Dendritic cell treated with granulocyte-macrophage colony-stimulating factor and Interleukin-4, amounts not matched to agents 40 ng/mL and 50 ng/mL, for 4 days (primary cell): ENCODE measurements at regions of chr6 and their contacts with region 1.

Region 1: GRCh38 chr6:145814501-145815308 is at the start of gene FBXO30:
- H3K4me3 Mint-ChIP-seq: peak within 1 kb of the TSS; percentile 88
- H3K27ac Mint-ChIP-seq: peak within 1 kb of the TSS; percentile 97
- H3K4me1 Mint-ChIP-seq: peaks cover 36% of the 10 kb centered on the region
- H3K27me3 Mint-ChIP-seq: no peaks in the 10 kb centered on the region

Region 2: GRCh38 chr6:145583739-145584138 is 231.0 kb before region 1 on chr6:
- intact Hi-C with region 1: no loop called
- H3K4me3 Mint-ChIP-seq: no peak overlapping the region
- H3K27ac Mint-ChIP-seq: no peak overlapping the region
- H3K4me1 Mint-ChIP-seq: no peaks in the 10 kb centered on the region
- H3K27me3 Mint-ChIP-seq: no peaks in the 10 kb centered on the region

Region 3: DNA sequence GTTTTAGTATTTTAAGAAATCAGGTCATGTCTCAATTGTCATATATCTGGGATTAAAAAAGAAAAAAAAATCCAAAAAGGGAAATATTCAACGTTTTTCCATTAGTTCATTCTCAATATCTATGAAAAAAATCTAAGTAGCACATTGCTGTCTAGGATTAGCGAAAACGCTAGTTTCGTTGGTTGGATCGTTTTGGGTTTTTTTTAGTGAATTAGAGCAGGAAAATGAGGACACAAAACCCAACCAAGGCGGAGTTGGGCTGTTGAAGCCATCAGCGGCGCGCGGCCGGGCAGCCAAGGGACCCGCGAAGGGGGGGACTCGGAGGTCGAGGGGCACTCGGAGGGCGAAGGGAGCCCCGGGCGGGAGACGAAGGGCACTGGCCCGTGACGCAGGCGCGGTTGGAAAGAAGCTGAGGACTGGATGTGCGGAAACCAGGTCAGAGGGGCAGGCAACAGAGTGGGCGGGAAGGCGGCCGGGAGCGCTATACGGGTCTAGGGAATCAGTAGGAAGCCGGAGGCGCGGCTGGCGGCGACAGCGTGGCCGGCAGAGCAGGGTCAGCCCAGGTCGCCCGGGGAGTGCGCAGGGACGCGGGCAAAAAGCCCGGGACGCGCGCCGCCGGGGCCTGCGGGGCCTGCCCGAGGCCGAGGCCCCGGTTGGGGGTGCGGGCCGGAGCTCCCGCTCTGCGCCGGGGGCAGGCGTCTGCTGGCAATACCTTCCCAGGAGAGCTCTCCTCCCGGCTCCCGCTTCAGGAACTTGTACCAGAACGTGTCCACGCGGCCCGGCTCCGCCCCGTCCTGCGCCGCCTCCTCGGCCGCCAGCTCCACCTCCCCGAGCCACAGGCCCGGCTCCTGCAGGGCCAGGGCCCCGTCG is 80.0 kb before region 1 on chr6:
- intact Hi-C with region 1: loop called (anchors 1 kb)
- H3K4me3 Mint-ChIP-seq: peak overlapping the region; percentile 99
- H3K27ac Mint-ChIP-seq: peak overlapping the region; percentile 97
- H3K4me1 Mint-ChIP-seq: peaks cover 31% of the 10 kb centered on the region
- H3K27me3 Mint-ChIP-seq: no peaks in the 10 kb centered on the region

Region 4: GRCh38 chr6:145866456-145867396 is 52.0 kb after region 1 on chr6:
- intact Hi-C with region 1: loop called (anchors 5 kb)
- H3K4me3 Mint-ChIP-seq: peak overlapping the region; percentile 23
- H3K27ac Mint-ChIP-seq: peak overlapping the region; percentile 35
- H3K4me1 Mint-ChIP-seq: peaks cover 40% of the 10 kb centered on the region
- H3K27me3 Mint-ChIP-seq: no peaks in the 10 kb centered on the region

Region 5: GRCh38 chr6:146153040-146153758 is 338.5 kb after region 1 on chr6:
- intact Hi-C with region 1: no loop called
- H3K4me3 Mint-ChIP-seq: no peak overlapping the region
- H3K27ac Mint-ChIP-seq: no peak overlapping the region
- H3K4me1 Mint-ChIP-seq: no peaks in the 10 kb centered on the region
- H3K27me3 Mint-ChIP-seq: no peaks in the 10 kb centered on the region